Activated naive CD4-positive, alpha-beta T cell treated with anti-CD3 and anti-CD28 coated beads for 36 hours (primary cell): ENCODE measurements at regions of chr6 and their contacts with region 1.

Region 1: DNA sequence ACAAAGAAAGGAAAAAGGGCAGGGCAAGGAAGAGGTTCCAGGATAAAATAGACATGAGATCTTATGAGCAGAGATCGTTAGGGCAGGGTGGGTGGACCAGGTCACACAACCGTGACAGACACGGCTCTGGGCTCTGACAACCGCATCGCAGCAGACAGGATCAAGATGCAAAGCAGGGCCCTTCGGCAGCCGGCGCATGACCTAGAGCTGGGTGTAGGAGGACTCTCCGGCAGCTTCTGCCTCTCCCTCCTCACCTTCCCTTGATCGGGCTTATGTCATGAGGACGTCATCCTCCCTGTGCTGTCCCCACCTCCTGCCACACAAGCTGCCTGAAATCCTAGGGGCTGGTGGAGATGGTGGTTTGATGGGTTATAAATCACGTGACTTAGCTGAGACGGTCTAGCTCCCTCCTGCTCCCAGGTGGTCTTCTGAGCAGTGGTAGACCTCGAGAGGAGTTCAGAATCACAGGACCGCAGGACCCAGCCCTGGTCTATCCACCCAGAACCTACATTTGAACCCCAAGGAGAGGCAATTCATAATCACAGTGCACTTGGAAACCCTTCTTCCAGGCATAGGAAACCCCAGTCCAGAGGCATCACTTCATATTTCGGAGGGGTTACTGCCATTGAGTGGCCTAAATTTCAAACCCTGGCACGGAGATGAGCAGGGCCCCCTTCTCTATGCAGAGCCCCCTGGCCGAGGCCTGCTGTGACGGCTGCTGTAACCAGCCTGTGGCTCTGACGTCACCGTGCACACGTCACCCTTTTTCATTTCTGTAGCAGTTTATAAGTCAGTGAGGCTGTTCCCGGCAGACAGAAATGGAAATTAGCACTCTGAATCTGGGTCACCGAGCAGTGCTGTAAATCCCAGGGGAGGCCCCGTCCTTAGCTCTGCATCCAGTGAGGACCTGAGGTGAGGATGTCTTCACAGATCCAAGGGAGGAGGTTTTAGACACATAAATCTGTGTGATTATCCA is 8.7 kb upstream of the CCR6 start:
- DNase-seq: peak; percentile 51
- H3K4me3 Mint-ChIP-seq: no peak overlapping the region
- H3K27ac Mint-ChIP-seq: peak overlapping the region; percentile 46
- H3K4me1 Mint-ChIP-seq: peaks cover 17% of the 10 kb centered on the region
- H3K27me3 Mint-ChIP-seq: peaks cover 2% of the 10 kb centered on the region

Region 2: GRCh38 chr6:167079853-167080297 is 34.3 kb before region 1 on chr6:
- CTCF ChIA-PET with region 1: no interaction called
- intact Hi-C with region 1: loop called (anchors 1 kb)
- DNase-seq: peak; percentile 77
- H3K4me3 Mint-ChIP-seq: no peak overlapping the region
- H3K27ac Mint-ChIP-seq: no peak overlapping the region
- H3K4me1 Mint-ChIP-seq: peaks cover 22% of the 10 kb centered on the region
- H3K27me3 Mint-ChIP-seq: peaks cover 7% of the 10 kb centered on the region

Region 3: DNA sequence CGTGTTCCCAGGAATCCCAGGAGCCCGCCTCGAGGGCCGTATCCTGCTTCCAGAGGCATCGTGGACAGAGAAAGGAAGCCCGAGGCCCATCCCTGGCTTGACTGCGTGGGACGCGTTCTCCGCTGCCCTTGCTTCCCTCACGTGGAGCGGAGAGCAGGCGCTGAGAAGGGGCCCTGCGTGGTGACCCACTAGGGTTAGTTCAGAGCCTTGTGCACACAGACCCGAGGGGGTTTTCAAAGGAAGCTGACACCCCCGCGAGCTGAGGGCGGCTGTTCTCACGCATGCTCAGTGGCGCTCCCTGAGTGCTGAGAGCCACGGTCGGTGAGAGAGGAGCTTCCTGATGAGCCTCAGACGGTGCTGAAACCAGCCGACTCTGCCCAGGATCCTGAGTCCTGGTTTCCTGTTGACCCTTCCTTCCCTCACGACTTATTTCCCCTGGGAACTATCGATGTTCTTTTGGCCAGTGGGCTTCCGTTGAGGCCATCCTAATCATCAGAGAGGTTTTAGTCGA is 20.2 kb before region 1 on chr6:
- CTCF ChIA-PET with region 1: no interaction called
- intact Hi-C with region 1: no loop called
- DNase-seq: peak; percentile 62
- H3K4me3 Mint-ChIP-seq: peak overlapping the region; percentile 0
- H3K27ac Mint-ChIP-seq: no peak overlapping the region
- H3K4me1 Mint-ChIP-seq: peaks cover 45% of the 10 kb centered on the region
- H3K27me3 Mint-ChIP-seq: peaks cover 2% of the 10 kb centered on the region